Esophagus muscularis mucosa (tissue), 4 donors: ENCODE measurements at regions of chr6 and their contacts with region 1.

Region 1: DNA sequence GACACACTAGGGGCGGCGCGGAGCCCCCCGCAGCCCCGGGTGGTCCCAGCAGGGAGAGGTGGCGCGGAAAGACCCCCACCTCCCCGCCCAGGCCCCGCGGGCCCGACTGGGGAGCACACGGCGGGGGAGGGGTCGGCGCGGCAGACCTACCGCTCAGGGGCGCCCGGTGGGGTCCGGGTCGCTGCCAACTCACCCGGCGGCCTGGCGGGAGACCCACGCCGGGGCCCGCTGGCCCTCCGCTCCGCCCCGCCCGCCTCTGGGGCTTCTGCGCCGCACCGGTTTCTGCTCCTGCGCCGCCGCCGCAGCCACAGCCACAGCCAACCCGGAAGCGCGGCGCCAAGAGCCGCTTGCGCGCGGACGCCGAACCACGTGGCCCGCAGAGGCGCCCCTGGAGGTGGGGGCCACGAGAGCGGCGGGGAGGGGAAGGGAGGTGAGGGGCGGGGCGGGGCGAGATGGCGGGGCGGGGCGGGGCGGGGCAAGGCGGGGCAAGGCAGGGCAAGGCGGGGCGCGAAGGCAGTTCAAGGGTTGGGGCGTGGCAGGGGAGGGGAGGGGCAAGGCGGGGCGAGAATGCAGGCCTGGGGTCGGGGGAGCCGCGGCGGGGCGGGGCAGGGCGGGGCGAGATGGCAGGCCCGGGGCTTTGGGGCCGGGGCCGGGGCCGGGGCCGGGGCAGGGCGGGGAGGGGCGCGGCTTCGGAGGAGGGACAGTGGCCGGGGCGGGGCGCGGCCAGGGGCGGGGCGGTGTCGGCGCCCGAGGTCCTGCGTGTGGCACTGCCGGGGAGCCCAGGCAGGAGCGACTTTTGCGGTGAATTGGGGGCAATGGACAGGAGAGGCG is at the start of gene ZBTB24:
- DNase-seq: peak; percentile 96
- H3K4me3 ChIP-seq: peak within 1 kb of the TSS; percentile 71 to 98 (median 92)
- H3K27ac ChIP-seq: peak within 1 kb of the TSS; percentile 81 to 89 (median 86)
- H3K4me1 ChIP-seq: peaks cover 36 to 53% (median 51%) of the 10 kb centered on the region in 4 donors
- H3K27me3 ChIP-seq: no peaks in the 10 kb centered on the region
- CTCF ChIP-seq: peak in 1 of 3 experiments; percentile 7
- EP300 ChIP-seq: no peak
- POLR2A ChIP-seq: peak; percentile 62
- total RNA-seq, gene ZBTB24: 5.3 to 6.4 (median 5.9) TPM

Region 2: GRCh38 chr6:108896111-108896661 is 586.9 kb before region 1 on chr6:
- intact Hi-C with region 1: no loop called
- DNase-seq: no peak
- H3K4me3 ChIP-seq: no peak overlapping the region
- H3K27ac ChIP-seq: peak overlapping the region; percentile 37 to 58 (median 52)
- H3K4me1 ChIP-seq: peaks cover 17 to 24% (median 21%) of the 10 kb centered on the region in 4 donors
- H3K27me3 ChIP-seq: no peaks in the 10 kb centered on the region
- CTCF ChIP-seq: no peak
- EP300 ChIP-seq: no peak
- POLR2A ChIP-seq: no peak

Region 3: GRCh38 chr6:109440331-109441068 is 42.6 kb before region 1 on chr6 and contains the starts of genes PPIL6 and SMPD2:
- intact Hi-C with region 1: loop called (anchors 5 kb)
- DNase-seq: peak; percentile 95
- H3K4me3 ChIP-seq: peak within 1 kb of the TSS; percentile 76 to 94 (median 86)
- H3K27ac ChIP-seq: peak within 1 kb of the TSS; percentile 82 to 89 (median 86)
- H3K4me1 ChIP-seq: peaks cover 18 to 33% (median 28%) of the 10 kb centered on the region in 4 donors
- H3K27me3 ChIP-seq: no peaks in the 10 kb centered on the region
- CTCF ChIP-seq: peak; percentile 16 to 26 (median 21)
- EP300 ChIP-seq: no peak
- POLR2A ChIP-seq: no peak
- total RNA-seq, gene PPIL6: 2.2 to 9.2 (median 5.5) TPM
- total RNA-seq, gene SMPD2: 4.6 to 7.6 (median 6.4) TPM